ENCODE measurements at regions of chr22 and their contacts with region 1.

Region 1: GRCh38 chr22:50582562-50583293 is at the start of gene CHKB:
- DNase-seq: peak; percentile 96 to 100 (median 99)

Region 2: DNA sequence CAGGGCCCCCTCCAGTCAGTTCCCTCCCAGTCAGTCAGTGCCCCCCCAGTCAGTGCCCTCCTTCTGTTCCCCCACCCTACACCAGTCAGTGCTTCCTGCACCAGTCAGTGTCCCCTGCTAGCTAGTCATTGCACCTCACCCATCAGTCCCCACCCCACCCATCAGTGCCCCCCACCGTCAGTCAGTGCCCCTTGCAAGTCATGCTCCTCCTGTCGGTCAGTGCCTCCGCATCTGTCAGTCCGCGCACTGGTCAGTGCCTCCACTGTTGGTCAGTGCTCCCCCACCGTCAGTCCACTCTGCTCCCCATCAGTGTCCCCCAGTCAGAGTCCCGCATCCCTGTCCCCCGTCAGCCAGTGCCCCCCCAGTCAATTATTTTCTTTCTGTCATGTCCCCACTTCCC is 236.3 kb before region 1 on chr22:
- intact Hi-C with region 1: no loop called
- DNase-seq: peak in 2 of 42 donors; percentile 11 to 19

Region 3: GRCh38 chr22:50525390-50526068 is 57.2 kb before region 1 on chr22 and contains the start of gene SCO2:
- intact Hi-C with region 1: loop called (anchors 5 kb)
- DNase-seq: peak; percentile 84 to 98 (median 95)

Measured in head of caudate nucleus (tissue), 42 donors.